Activated CD4-positive, alpha-beta T cell treated with anti-CD3 and anti-CD28 coated beads, Interleukin-2, amount 10 ng/mL, durations not matched to agents 24 days and 14 days (primary cell): ENCODE measurements at regions of chr22 and their contacts with region 1.

Region 1: DNA sequence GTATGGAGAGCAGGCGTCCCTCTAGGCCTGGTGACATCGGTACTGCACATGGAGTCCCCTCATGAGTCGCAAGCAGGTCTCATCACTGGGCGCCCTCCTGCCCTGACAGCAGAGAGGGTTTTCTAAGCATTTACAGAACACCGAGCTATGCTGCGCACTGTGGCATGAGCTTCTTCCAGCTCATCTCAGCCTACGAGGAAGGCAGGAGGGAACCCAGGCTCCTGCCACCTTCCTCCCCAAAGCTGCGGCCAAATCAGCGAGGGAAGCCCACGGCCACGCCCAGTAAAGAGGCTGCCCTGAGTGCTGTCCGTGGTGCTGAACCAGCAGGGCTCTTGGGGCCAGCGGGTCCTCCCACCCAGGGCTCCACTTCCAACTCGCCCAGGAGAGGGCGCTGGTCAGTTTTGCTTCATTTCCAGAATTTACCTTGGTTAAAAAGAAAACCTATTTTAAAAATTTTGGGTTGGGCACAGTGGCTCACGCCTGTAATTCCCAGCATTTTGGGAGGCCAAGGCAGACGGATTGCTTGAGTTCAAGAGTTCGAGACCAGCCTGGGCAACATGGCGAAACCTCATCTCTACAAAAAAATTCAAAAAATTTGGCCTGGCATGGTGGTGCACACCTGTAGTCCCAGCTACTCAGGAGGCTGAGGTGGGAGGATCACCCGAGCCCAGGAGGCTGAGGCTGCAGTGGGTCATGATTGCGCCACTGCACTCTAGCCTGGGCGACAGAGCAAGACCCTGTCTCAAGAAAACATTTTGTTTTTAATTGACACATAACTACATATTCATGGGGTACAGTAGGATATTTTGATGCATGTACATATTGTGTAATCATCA is 34.2 kb downstream of the PHF21B start:
- DNase-seq: peak; percentile 94
- H3K4me3 Mint-ChIP-seq: no peak overlapping the region
- H3K27ac Mint-ChIP-seq: no peak overlapping the region
- H3K4me1 Mint-ChIP-seq: no peaks in the 10 kb centered on the region
- H3K27me3 Mint-ChIP-seq: no peaks in the 10 kb centered on the region

Region 2: GRCh38 chr22:44648818-44649565 is 326.7 kb before region 1 on chr22:
- intact Hi-C with region 1: no loop called
- DNase-seq: no peak
- H3K4me3 Mint-ChIP-seq: no peak overlapping the region
- H3K27ac Mint-ChIP-seq: no peak overlapping the region
- H3K4me1 Mint-ChIP-seq: no peaks in the 10 kb centered on the region
- H3K27me3 Mint-ChIP-seq: peaks cover 7% of the 10 kb centered on the region

Region 3: GRCh38 chr22:45082795-45083194 is 107.2 kb after region 1 on chr22:
- intact Hi-C with region 1: loop called (anchors 5 kb)
- DNase-seq: peak; percentile 59
- H3K4me3 Mint-ChIP-seq: no peak overlapping the region
- H3K27ac Mint-ChIP-seq: no peak overlapping the region
- H3K4me1 Mint-ChIP-seq: peaks cover 5% of the 10 kb centered on the region
- H3K27me3 Mint-ChIP-seq: no peaks in the 10 kb centered on the region

Region 4: DNA sequence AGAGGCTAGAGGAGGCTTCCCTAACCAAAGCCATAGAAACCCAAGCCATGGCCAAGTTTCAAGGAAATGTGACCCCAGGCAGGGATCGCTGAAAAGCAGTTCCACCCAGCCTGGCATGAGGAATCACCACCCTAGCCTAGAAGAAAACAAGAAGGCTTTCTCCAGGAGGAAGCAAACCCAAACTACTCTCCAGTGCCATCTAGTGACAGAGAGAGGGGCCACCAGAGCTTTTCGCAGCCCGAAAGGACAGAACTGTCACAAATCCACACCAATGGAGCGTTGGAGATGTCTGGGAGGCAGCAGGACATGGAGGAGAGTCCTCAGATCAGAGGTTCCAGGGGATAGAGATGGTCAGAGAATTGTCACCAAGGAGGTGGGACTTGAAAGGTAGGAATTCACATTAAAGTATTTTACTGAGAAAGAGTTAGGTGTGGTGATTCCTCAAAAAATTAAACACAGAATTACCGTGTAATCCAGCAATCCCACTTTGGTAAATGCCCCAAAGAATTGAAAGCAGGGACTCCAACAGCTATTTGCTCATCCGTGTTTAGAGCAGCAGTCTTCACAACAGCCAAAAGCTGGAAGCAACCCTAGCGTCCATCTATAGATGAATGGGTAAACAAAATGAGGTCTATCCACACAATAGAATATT is 120.7 kb after region 1 on chr22:
- intact Hi-C with region 1: loop called (anchors 1 kb)
- DNase-seq: peak; percentile 85
- H3K4me3 Mint-ChIP-seq: no peak overlapping the region
- H3K27ac Mint-ChIP-seq: no peak overlapping the region
- H3K4me1 Mint-ChIP-seq: no peaks in the 10 kb centered on the region
- H3K27me3 Mint-ChIP-seq: peaks cover 13% of the 10 kb centered on the region

Region 5: DNA sequence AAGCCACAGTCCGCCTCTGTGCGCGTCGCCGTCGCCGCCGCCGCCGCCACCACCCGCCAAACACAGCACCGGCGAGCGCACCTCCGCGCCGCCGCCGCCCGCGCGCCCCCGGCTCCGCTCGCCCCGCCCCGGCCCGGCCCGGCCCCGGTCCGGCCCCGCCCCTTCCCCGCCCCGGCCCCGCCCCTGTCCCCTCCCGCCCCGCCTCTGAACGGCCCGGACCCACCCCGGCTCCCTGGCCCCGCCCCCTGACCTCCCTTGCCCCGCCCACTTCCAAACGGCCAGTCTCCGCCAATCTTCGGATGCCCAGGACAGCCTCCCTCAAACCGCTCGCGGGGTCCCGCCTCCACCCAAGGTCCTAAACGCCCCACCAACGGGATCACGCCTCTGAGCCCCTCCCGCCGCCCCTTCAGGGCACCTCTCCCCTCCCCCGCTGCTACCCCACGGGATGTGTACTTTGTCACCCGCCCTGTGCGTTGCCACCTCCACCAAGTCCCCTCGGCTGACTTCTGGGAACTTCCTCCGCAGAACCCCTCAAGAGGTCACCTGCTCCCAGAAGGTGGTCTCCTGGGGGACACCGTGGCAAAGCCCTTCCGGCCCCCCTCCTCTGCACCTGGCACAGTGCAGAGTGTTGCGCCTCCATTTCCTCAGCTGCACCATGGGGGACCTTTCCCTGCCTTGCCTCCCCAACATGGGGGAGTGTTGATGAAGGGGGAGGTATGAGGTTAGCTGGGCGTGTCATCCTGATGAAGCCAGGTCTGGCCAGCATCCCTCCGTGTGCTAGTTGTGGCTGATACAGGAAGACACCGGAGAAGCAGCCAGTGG is 265.4 kb after region 1 on chr22 and contains the start of gene KIAA0930:
- intact Hi-C with region 1: loop called (anchors 10 kb)
- DNase-seq: peak; percentile 92
- H3K4me3 Mint-ChIP-seq: peak within 1 kb of the TSS; percentile 97
- H3K27ac Mint-ChIP-seq: peak within 1 kb of the TSS; percentile 91
- H3K4me1 Mint-ChIP-seq: peaks cover 10% of the 10 kb centered on the region
- H3K27me3 Mint-ChIP-seq: no peaks in the 10 kb centered on the region
- total RNA-seq, gene KIAA0930: 45.3 and 45.6 TPM in 2 replicates